A549 (cell line): ENCODE measurements at regions of chr9 and their contacts with region 1.

Region 1: DNA sequence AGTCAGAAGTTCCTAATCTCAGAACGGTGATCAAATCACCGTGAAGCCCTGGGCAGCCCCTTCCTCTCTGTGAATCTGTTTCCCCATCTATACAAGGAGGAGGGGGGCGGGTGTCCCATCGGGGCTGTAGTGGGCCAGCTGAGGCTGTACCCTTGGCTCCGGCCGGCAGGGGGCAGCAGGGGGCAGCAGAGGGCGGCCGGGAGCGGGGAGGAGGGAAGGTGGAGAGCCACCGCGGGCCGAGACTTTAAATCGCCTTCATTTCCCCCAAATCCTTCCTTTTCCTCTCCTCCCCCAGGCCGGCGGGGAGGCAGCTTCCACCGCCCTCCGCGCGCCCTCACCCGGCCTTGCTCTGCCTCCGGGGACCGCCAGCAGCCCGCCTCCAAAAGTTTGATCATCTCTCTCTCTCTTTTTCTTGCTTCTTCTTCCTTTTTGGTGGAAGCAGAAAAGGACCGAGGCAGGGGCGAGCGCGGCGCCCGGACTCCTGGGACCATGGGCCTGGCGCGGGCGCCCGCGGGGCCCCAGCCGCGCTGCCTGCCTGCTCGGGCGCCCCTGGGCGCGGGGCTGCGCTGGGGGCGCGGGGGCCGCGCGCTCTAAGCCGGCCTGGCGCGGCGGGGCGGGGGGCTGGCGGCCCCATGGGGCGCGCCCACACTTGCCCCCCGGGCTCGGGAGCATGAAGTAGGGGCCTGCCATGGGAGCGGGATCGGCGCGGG is at the start of gene COL27A1:
- DNase-seq: peak; percentile 76 to 82
- ATAC-seq: peak; percentile 80 to 90
- H3K4me3 ChIP-seq: peak within 1 kb of the TSS; percentile 92
- H3K27ac ChIP-seq: peak within 1 kb of the TSS; percentile 69 to 96
- H3K4me1 ChIP-seq: peaks cover 23% of the 10 kb centered on the region
- CTCF ChIP-seq: peak; percentile 81
- EP300 ChIP-seq: no peak
- POLR2A ChIP-seq: peak; percentile 39; the same call in 1 of the 2 replicates
- RAD21 ChIP-seq: peak; percentile 76 to 84
- polyA plus RNA-seq, gene COL27A1: 6.9 and 8.5 TPM in 2 replicates

Region 2: DNA sequence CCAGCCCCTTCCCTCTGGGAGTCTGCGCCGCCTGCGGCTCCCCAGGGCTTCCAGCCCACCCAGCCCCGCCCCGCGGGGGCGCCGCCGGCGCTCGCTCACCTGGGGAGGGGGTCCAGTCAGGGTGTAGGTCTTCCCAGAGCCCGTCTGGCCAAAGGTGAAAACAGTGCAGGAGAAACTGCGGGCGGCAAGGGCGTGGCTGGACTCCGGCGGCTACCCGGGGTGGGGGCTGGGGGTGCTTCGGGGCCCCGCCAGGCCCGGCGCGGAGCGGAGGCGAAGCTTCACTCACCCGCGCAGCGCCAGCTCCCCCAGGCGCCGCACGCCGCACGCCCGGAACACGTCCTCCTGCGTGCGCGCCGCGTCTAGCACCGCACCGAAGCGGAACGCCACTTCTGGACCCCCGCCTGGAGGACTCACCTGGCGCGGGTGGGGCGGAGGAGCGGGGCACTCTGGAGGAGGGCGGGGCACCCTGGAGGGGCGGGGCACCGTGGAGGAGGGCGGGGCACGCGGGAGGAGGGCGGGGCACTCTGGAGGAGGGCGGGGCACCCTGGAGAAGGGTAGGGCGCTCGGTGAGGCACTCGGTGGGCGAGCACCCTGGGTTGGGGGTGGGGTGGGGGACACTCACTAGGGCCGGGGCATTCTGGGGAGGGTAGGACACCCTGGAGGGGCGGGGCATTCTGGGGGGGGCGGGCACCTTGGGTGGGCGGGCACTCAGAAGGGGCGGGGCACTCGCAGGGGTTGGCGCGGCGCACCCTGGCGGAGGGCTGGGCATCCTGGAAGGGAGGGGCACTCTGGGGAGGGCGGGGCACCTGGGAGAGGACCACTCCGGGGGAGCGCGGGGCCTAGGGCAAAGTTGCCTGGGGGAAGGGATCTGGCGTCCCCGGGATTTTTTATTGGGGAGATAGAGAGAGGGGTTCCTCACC is 57.1 kb before region 1 on chr9:
- CTCF ChIA-PET with region 1: interaction called, 12 read pairs
- POLR2A ChIA-PET with region 1: no interaction called
- DNase-seq: peak; percentile 70 to 75
- ATAC-seq: peak; percentile 81 to 87
- H3K4me3 ChIP-seq: peak overlapping the region; percentile 84
- H3K27ac ChIP-seq: peak overlapping the region; percentile 71 to 91
- H3K4me1 ChIP-seq: peaks cover 27% of the 10 kb centered on the region
- CTCF ChIP-seq: no peak
- EP300 ChIP-seq: no peak
- POLR2A ChIP-seq: no peak
- RAD21 ChIP-seq: no peak

Region 3: GRCh38 chr9:114131808-114132549 is 23.4 kb before region 1 on chr9:
- CTCF ChIA-PET with region 1: interaction called, 30 read pairs
- POLR2A ChIA-PET with region 1: no interaction called
- DNase-seq: no peak
- ATAC-seq: no peak
- H3K4me3 ChIP-seq: no peak overlapping the region
- H3K27ac ChIP-seq: no peak overlapping the region
- H3K4me1 ChIP-seq: no peaks in the 10 kb centered on the region
- CTCF ChIP-seq: no peak
- EP300 ChIP-seq: no peak
- POLR2A ChIP-seq: no peak
- RAD21 ChIP-seq: no peak

Region 4: GRCh38 chr9:114169029-114169951 is 13.9 kb after region 1 on chr9:
- CTCF ChIA-PET with region 1: interaction called, 29 read pairs
- POLR2A ChIA-PET with region 1: no interaction called
- DNase-seq: no peak
- ATAC-seq: no peak; a peak in 1 of 6 replicates
- H3K4me3 ChIP-seq: no peak overlapping the region
- H3K27ac ChIP-seq: no peak overlapping the region
- H3K4me1 ChIP-seq: peaks cover 3% of the 10 kb centered on the region
- CTCF ChIP-seq: no peak
- EP300 ChIP-seq: no peak
- POLR2A ChIP-seq: no peak
- RAD21 ChIP-seq: no peak

Region 5: GRCh38 chr9:114259798-114260523 is 104.5 kb after region 1 on chr9:
- CTCF ChIA-PET with region 1: interaction called, 18 read pairs
- POLR2A ChIA-PET with region 1: interaction called, 3 read pairs
- DNase-seq: no peak
- ATAC-seq: no peak
- H3K4me3 ChIP-seq: no peak overlapping the region
- H3K27ac ChIP-seq: no peak overlapping the region
- H3K4me1 ChIP-seq: no peaks in the 10 kb centered on the region
- CTCF ChIP-seq: no peak
- EP300 ChIP-seq: no peak
- POLR2A ChIP-seq: no peak
- RAD21 ChIP-seq: no peak

Region 6: DNA sequence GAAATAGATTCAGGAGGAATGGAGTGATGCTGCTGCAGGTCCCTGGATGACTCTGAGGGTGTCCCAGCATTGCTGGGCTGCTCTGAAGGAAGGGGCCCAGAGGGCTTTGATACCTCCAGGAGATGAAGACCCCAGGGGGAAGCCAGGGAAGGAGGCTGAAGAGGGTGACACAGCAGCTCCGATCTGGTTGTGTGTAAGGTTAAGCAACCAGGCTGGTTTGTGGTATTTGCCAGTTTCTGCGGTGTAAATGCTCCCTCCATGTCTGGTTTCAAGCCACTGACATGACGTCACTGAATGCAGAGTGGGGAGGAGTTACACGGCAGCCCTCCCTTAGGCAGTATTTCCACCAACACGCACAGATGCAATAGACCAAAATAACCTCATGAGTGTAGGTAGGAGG is 127.5 kb after region 1 on chr9:
- CTCF ChIA-PET with region 1: interaction called, 33 read pairs
- POLR2A ChIA-PET with region 1: no interaction called
- DNase-seq: peak in 1 of 2 experiments; percentile 46
- ATAC-seq: peak; percentile 25 to 31; a peak in 4 of 6 replicates
- H3K4me3 ChIP-seq: no peak overlapping the region
- H3K27ac ChIP-seq: peak overlapping the region; percentile 53 to 88; a peak in 4 of 6 replicates
- H3K4me1 ChIP-seq: peaks cover 69% of the 10 kb centered on the region
- CTCF ChIP-seq: no peak
- EP300 ChIP-seq: no peak
- POLR2A ChIP-seq: no peak
- RAD21 ChIP-seq: no peak

Region 7: DNA sequence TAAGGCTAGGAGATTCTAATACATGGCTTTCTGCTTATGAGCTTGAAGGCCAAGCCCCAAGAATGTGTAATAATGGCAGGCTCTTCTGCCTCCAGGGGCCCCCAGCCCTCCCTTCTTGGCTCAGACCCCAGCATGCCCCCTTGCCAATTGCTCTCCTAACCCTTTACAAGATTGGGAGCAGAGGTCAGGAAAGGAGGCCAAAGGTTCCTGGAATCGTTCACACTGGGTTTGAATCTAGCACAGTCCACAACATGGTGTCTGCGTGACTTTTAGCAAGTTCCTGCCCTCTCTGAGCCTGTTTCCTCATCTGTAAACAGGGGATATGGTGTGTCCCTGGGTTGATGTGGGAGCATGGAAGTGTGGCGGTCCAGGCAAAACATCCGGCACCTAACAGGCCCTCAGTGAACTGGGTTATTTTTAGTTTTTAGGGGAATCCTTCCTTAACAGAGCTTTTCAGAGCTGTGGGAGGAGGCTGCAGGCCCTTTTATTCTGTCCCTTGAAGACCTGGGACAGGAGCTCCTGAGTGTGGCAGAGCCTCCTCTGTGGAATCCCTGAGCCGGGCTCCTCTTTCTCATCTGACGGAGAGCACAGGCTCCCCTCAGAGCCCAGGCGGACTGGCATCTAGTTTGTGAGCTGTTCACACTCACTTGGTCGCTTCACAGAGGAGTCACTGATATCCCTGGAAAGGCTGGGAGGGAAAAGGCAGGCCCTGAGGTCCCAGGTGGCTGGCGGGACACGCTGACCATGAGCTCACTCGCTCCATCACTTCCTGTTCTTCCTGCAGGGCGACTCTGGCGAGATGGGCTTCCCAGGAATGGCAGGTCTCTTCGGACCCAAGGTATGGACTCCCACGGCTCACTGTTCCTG is 144.1 kb after region 1 on chr9:
- CTCF ChIA-PET with region 1: interaction called, 181 read pairs
- POLR2A ChIA-PET with region 1: no interaction called
- DNase-seq: no peak
- ATAC-seq: no peak
- H3K4me3 ChIP-seq: no peak overlapping the region
- H3K27ac ChIP-seq: no peak overlapping the region
- H3K4me1 ChIP-seq: no peaks in the 10 kb centered on the region
- CTCF ChIP-seq: no peak
- EP300 ChIP-seq: no peak
- POLR2A ChIP-seq: no peak
- RAD21 ChIP-seq: no peak